Left lung (tissue), 14 donors: ENCODE measurements at regions of chr4 and their contacts with region 1.

Region 1: GRCh38 chr4:5979976-5980375 is 38.3 kb downstream of the C4orf50 start:
- DNase-seq: peak in 1 of 4 donors; percentile 21
- ATAC-seq: peak; percentile 29
- H3K4me3 ChIP-seq: no peak overlapping the region
- H3K27ac ChIP-seq: no peak overlapping the region
- H3K4me1 ChIP-seq: no peaks in the 10 kb centered on the region
- H3K27me3 ChIP-seq: peaks cover 0 to 36% of the 10 kb centered on the region in 2 donors
- CTCF ChIP-seq: peak in 1 of 2 donors; percentile 36

Region 2: DNA sequence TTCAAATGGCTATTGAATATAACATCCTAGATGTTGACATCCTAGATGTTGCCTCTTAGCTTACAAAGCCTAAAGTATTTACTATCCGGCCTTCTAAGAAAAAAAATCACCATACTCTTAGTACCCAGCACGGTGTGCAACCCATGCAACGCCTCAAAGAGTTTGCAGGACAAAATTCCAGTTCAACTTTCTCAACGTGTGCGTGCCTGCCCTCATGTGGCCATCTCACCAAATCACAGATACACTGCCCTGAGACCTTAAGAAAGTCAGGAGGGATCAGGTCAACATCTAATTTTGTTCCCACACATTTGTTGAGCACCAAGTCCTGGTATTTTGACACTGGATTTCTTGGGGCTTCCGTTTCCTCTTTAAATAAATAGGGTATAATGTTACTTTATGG is 155.3 kb before region 1 on chr4:
- intact Hi-C with region 1: loop called in 1 of 2 experiments (anchors 10 kb)
- DNase-seq: no peak
- ATAC-seq: peak; percentile 37
- H3K4me3 ChIP-seq: no peak overlapping the region
- H3K27ac ChIP-seq: no peak overlapping the region
- H3K4me1 ChIP-seq: peaks cover 0 to 14% of the 10 kb centered on the region in 2 donors
- H3K27me3 ChIP-seq: no peaks in the 10 kb centered on the region
- CTCF ChIP-seq: peak in 1 of 2 donors; percentile 23

Region 3: DNA sequence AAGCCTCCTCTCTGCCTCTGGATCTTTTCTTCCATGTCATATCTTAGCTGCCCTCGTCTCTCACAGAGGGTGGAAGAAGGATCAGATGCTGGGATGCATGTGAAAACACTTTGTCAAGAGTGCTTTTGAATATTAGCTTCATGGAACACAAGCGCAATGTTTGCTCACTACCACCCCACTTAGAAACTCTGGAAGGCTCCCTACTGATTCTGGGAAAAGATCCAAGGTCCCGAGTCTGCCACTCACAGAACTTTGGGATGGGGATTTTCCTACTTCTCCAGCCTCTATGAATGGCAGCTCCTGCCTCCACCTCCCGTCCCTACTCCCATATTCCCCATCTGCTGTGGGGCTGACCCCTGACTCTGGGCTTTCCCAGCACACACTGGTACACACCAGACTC is 46.9 kb before region 1 on chr4:
- intact Hi-C with region 1: no loop called
- DNase-seq: no peak
- ATAC-seq: no peak
- H3K4me3 ChIP-seq: no peak overlapping the region
- H3K27ac ChIP-seq: no peak overlapping the region
- H3K4me1 ChIP-seq: no peaks in the 10 kb centered on the region
- H3K27me3 ChIP-seq: peaks cover 0 to 34% of the 10 kb centered on the region in 2 donors
- CTCF ChIP-seq: no peak

Region 4: DNA sequence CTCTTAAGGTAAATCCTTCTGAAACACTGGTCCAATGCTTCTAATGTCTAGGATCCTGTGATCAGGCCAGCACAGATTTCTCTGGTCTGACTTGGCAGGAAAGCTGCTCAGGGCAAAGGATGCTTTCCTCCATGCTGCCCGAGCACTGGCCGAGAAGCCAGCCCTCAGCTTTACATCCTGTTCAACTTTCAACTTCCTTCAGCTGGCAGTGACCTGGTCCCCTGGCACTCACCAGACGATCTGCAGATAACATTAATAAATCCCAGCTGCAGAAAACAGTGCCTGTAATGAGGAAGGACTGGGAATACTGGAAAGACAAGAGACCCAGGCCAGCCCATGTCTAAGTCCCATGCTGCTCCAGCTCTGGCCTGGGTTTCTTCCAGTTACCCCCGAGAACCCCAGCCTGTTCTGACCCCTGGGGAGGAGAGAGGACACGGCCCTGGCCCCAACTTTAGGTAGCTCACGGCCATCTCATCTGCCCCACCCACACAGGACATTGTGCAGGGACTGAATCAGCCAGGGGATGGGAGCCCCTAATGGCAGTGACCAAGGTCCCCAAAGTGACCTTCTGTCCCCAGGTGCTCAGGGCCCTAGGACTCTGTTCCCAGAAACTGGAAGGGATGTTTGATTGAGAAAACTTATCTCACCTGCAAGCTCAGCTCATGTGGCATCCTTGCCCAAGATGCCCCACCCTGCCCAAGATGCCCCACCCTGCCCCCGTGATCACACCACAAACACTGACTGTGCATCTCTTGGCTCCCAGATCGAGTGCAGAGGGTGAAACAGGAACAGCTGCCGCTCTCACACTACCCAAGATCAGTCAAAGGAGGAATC is 192.3 kb after region 1 on chr4:
- intact Hi-C with region 1: no loop called
- DNase-seq: no peak
- ATAC-seq: no peak
- H3K4me3 ChIP-seq: no peak overlapping the region
- H3K27ac ChIP-seq: no peak overlapping the region
- H3K4me1 ChIP-seq: no peaks in the 10 kb centered on the region
- H3K27me3 ChIP-seq: no peaks in the 10 kb centered on the region
- CTCF ChIP-seq: no peak